OCI-LY7 (cell line): ENCODE measurements at regions of chr10 and their contacts with region 1.

Region 1: DNA sequence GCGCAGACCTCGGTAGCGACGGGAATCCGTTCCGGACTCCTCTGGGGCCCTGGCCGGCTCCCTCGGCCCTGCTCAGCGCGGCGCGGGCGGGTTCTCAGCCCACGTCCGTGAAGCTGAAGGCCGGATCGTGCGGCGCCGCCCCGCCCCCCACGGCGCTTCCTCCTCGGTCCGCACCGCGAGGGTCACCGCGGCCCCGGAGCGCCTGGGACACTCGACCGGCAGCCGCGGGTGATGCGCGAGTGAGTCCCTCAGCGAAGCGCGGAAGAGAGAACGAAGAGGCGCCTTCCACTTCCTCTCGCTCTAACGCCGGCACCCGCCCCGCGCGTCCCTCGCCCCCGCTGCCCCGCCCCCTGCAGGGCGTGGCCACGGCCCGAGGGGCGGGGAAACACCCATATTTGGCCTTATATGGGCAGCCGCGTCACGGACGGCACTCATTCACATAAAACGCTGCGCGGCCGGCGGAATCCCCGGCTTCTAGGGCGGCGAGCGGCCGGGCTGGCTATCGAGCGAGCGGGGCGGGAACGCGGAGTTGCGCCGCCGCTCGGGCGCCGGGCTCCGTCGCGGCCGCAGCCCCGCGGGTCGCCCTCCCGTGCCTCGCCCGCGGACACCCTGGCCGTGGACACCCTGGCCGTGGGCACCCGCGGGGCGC is at the start of gene DUSP5:
- DNase-seq: peak; percentile 96
- H3K4me3 ChIP-seq: peak within 1 kb of the TSS; percentile 70
- H3K27ac ChIP-seq: no peak within 1 kb of the TSS
- H3K4me1 ChIP-seq: peaks cover 36% of the 10 kb centered on the region
- CTCF ChIP-seq: no peak
- total RNA-seq, gene DUSP5: 0.06 and 0.08 TPM in 2 replicates

Region 2: DNA sequence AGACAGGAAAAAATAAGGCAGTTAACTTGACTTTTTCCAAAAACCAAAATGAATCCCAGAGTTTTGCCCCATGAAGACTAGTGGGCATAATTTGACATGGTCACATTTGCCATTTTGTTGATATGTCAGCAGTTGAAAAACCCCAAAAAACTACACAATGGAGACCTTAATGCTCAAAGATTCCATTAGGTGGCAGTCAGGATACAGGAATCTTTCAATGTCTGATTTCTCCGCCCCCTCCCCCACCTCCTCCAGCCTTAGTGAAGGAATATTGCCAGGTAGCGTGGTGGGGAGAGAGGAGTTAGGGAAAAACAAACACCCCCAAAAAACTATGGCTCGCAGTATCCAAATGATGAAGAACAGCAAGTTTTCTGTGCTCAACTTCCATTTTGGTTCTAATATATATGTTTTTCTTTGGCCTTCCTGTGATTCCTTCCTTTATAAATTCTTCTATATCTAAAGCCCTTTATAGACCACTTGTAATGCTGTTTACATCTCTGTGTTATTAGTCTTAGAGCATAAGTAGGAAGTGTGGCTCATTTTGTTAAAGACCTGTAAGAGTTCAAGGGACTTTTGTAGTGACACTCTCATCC is 186.1 kb before region 1 on chr10:
- CTCF ChIA-PET with region 1: no interaction called
- POLR2A ChIA-PET with region 1: interaction called, 3 read pairs
- intact Hi-C with region 1: loop called (anchors 2 kb)
- DNase-seq: peak; percentile 77
- H3K4me3 ChIP-seq: no peak overlapping the region
- H3K27ac ChIP-seq: no peak overlapping the region
- H3K4me1 ChIP-seq: peaks cover 36% of the 10 kb centered on the region
- CTCF ChIP-seq: peak; percentile 93

Region 3: DNA sequence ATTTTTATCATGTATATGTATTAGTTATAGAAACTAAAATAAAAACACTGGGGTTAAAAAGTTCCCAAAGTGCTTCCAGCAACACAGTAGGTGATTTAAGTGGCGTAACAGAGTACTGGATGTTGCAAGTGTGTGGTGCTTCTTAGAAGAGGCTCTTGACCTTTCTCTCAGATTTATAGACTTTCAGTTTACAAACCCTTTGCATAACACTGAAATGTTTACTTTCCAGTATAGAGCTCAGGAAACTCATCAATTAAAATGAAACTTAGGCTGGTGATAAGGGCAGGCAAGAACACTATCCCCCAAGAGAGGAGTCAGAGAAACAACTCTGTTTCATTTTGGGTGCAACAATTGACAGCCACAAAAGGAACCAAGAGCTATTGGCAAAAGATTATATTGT is 42.5 kb after region 1 on chr10:
- CTCF ChIA-PET with region 1: no interaction called
- POLR2A ChIA-PET with region 1: no interaction called
- intact Hi-C with region 1: no loop called
- DNase-seq: no peak
- H3K4me3 ChIP-seq: no peak overlapping the region
- H3K27ac ChIP-seq: no peak overlapping the region
- H3K4me1 ChIP-seq: peaks cover 25% of the 10 kb centered on the region
- CTCF ChIP-seq: no peak

Region 4: DNA sequence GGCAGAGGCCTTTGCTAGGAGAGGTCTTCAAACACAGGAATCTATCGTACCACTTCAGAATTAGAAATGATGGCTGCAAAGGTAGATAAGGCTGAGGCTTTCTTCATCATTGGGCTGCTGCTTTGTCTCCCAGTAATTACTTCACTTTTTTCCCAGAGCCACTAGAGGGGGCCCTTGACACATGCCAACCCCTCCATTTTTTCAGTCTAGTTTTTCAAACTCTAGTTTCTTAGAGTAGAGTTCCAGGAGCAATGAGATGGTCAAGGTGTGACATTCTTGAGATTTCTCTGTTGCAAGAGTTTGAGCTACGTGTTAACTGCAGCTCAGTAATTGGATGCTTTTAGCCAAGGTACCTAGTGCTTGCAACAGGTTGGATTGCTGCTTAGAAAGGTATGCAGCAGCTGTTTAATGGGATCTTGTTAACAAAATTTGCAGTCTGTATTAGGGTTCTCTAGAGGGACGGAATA is 112.8 kb after region 1 on chr10:
- CTCF ChIA-PET with region 1: no interaction called
- POLR2A ChIA-PET with region 1: no interaction called
- intact Hi-C with region 1: no loop called
- DNase-seq: peak; percentile 76
- H3K4me3 ChIP-seq: no peak overlapping the region
- H3K27ac ChIP-seq: no peak overlapping the region
- H3K4me1 ChIP-seq: peaks cover 29% of the 10 kb centered on the region
- CTCF ChIP-seq: peak; percentile 98

Region 5: DNA sequence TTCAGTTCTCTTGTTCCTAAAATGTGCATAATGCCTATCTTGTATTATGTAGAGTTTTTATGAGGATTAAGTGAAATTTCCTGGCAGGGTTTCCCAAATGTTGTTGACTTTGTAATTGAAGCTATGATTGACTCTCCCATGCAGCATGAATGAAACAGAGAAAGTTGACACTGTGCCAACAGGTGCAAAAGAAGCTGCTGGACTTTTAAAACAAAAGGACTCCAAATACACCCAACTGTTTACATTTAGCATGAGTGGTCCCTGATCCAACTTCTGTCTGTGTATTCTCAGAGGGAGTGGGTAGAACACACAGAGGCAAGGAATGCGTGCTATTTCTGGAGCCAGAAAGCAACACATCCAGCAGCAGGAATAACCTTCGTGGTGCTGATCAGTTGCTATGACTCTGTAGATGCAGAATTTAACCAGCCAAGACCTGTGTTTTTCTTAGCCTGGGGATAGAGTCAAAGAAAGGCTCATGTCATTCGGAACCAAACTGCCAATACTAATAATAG is 132.2 kb after region 1 on chr10:
- CTCF ChIA-PET with region 1: no interaction called
- POLR2A ChIA-PET with region 1: no interaction called
- intact Hi-C with region 1: no loop called
- DNase-seq: no peak
- H3K4me3 ChIP-seq: no peak overlapping the region
- H3K27ac ChIP-seq: no peak overlapping the region
- H3K4me1 ChIP-seq: no peaks in the 10 kb centered on the region
- CTCF ChIP-seq: no peak